ENCODE measurements at regions of chr11 and their contacts with region 1.

Region 1: GRCh38 chr11:78868563-78868962 is 293.9 kb upstream of the NARS2 start:
- DNase-seq: no peak
- ATAC-seq: no peak
- H3K4me3 ChIP-seq: no peak overlapping the region
- H3K27ac ChIP-seq: no peak overlapping the region
- H3K4me1 ChIP-seq: no peaks in the 10 kb centered on the region; the same call in 1 of the 2 replicates
- H3K27me3 ChIP-seq: no peaks in the 10 kb centered on the region
- CTCF ChIP-seq: no peak
- POLR2A ChIP-seq: no peak
- RAD21 ChIP-seq: no peak

Region 2: DNA sequence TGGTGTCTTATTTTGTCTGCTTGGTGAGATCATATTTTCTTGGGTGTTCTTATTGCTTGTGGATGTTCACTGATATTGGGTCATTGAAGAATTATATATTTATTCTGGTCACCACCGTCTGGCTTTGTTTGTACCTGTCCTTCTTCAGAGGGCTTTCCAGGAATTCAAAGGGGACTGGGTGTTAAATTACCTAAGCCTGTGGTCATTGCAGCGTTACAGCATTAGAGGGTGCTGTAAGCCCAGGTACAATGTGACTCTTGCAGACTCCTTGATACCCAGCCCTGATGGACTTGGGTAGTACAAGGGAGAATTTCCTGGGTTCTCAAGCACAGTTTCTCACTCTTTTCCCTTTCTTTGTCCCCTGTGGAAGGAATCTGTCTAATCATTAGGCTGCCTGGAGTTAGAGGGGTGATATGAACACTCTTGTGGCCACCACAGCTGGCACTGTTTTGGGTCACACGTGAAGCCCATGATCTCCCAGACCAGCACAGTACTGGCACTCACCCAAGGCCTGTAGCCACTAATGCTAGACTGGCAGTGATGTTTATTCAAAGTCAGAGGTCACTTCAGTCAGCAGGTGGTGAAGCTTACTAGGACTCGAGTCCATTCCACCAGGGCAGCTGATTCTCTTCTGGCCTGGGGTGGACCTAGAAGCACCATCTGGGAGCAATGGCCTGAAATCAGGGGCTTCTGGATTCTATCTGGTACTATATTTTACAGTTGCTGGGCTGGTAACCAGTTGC is 237.8 kb before region 1 on chr11:
- CTCF ChIA-PET with region 1: no interaction called
- POLR2A ChIA-PET with region 1: no interaction called
- dilution Hi-C with region 1: no loop called
- in situ Hi-C with region 1: no loop called
- intact Hi-C with region 1: no loop called
- DNase-seq: no peak
- ATAC-seq: no peak
- H3K4me3 ChIP-seq: no peak overlapping the region
- H3K27ac ChIP-seq: no peak overlapping the region
- H3K4me1 ChIP-seq: no peaks in the 10 kb centered on the region
- H3K27me3 ChIP-seq: peaks cover 2% of the 10 kb centered on the region
- CTCF ChIP-seq: no peak
- POLR2A ChIP-seq: no peak
- RAD21 ChIP-seq: peak; percentile 19; the same call in 1 of the 2 replicates

Region 3: DNA sequence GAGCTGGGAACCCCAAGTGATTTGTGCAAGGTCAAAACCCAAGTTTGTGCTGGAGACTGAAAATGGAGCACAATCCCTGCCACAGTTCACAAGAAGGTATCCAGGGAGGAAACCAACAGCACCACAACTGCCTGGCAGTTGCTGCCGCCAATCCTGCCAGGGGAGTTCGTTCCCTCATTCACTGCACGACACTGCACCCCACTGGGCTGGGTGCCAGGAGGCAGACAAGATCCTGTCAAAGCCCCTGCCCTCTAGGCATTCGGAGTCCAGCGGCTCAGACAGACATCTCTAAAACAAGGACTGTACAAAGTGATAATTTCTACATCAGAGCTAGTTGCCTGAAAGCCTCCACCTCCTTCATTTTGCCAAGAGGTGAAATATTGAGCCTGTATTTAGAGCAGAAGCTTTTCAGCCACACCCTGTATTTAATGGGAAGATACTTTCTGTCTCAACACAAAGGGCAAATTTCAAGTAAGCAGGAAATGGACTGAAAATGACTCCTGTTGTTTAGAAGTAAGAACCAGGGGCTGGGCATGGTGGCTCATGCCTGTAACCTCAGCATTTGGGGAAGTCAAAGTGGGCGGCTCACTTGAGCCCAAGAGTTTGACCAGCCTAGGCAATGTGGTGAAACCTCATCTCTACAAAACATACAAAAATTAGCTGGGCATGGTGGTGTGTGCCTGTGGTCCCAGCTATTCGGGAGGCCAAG is 16.5 kb before region 1 on chr11:
- CTCF ChIA-PET with region 1: no interaction called
- POLR2A ChIA-PET with region 1: no interaction called
- dilution Hi-C with region 1: no loop called
- in situ Hi-C with region 1: no loop called
- intact Hi-C with region 1: no loop called
- DNase-seq: no peak
- ATAC-seq: no peak
- H3K4me3 ChIP-seq: no peak overlapping the region
- H3K27ac ChIP-seq: no peak overlapping the region
- H3K4me1 ChIP-seq: peaks cover 8% of the 10 kb centered on the region; the same call in 1 of the 2 replicates
- H3K27me3 ChIP-seq: no peaks in the 10 kb centered on the region
- CTCF ChIP-seq: no peak
- POLR2A ChIP-seq: no peak
- RAD21 ChIP-seq: no peak

Region 4: GRCh38 chr11:78940500-78941225 is 72.1 kb after region 1 on chr11:
- CTCF ChIA-PET with region 1: no interaction called
- POLR2A ChIA-PET with region 1: no interaction called
- dilution Hi-C with region 1: no loop called
- in situ Hi-C with region 1: no loop called
- intact Hi-C with region 1: no loop called
- DNase-seq: no peak
- ATAC-seq: no peak
- H3K4me3 ChIP-seq: no peak overlapping the region
- H3K27ac ChIP-seq: no peak overlapping the region
- H3K4me1 ChIP-seq: no peaks in the 10 kb centered on the region
- H3K27me3 ChIP-seq: no peaks in the 10 kb centered on the region
- CTCF ChIP-seq: no peak
- POLR2A ChIP-seq: no peak
- RAD21 ChIP-seq: no peak

Region 5: DNA sequence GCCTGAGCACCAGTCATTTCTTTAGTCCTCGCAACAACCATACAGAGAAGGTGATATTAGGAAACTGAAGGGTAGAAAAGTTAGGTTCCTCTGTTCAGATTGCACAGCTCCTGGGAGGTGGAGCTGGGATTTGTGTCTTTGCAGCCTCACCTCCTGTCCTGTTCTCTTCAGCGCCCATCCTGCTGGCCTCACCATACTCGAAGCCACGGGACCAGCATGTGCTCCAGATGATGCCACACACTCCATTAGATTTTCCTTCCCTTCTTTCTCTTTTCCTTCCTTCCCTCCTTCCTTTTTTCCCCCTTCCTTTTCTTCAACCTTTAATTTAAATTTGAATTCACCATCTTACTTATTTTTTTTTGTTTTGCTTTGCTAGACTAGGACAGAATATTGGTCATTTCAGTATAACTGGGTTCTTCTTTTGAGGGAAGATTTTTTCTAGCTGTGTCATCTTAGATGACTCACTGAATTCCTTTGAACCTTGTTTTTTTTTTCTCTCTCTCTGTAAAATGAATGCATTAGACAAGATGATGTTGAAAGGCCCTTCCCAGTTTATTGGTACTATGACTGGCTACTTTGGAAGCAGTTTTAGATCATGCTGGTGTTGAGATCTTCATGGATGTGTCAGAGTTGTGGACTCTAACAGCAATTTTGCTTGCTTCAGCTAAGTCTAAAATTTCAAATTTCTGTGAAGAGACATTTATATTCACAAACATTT is 1234.7 kb after region 1 on chr11:
- CTCF ChIA-PET with region 1: interaction called, 12 read pairs
- POLR2A ChIA-PET with region 1: no interaction called
- dilution Hi-C with region 1: no loop called
- in situ Hi-C with region 1: no loop called
- intact Hi-C with region 1: no loop called
- DNase-seq: peak; percentile 97
- ATAC-seq: peak; percentile 96
- H3K4me3 ChIP-seq: no peak overlapping the region
- H3K27ac ChIP-seq: peak overlapping the region; percentile 98
- H3K4me1 ChIP-seq: peaks cover 8% of the 10 kb centered on the region
- H3K27me3 ChIP-seq: no peaks in the 10 kb centered on the region
- CTCF ChIP-seq: no peak
- POLR2A ChIP-seq: no peak
- RAD21 ChIP-seq: no peak